SK-N-SH (cell line): ENCODE measurements at regions of chr2 and their contacts with region 1.

Region 1: DNA sequence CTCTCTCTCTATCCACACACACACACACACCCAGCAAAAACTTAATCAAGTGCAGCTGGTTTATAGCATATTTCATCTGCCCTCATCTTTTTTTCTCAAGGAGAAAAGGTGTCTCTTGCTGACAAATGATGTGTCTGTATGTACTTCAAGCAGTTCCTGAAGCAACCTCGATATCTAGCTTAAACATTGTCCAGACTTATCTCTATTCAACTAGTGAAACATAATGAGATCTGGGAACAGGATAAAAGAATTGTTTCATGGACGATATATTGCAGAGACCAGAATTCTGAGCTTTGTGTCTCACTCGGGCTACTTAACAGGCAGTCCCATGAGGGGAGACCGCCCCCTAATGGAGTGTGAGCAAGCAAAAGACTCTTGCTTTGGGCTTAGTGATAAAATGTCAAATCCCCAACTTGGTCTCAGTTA is 929.2 kb upstream of the SOX11 start:
- DNase-seq: peak; percentile 62
- H3K4me3 ChIP-seq: no peak overlapping the region; a peak in 1 of 4 replicates
- H3K27ac ChIP-seq: no peak overlapping the region
- H3K4me1 ChIP-seq: peaks cover 2 to 6% of the 10 kb centered on the region in 2 experiments; a peak in 3 of 4 replicates
- H3K27me3 ChIP-seq: no peaks in the 10 kb centered on the region
- CTCF ChIP-seq: no peak
- EP300 ChIP-seq: no peak
- RAD21 ChIP-seq: peak; percentile 76

Region 2: GRCh38 chr2:4039896-4040295 is 723.1 kb before region 1 on chr2:
- CTCF ChIA-PET with region 1: no interaction called
- POLR2A ChIA-PET with region 1: no interaction called
- DNase-seq: no peak
- H3K4me3 ChIP-seq: no peak overlapping the region
- H3K27ac ChIP-seq: no peak overlapping the region
- H3K4me1 ChIP-seq: no peaks in the 10 kb centered on the region
- H3K27me3 ChIP-seq: no peaks in the 10 kb centered on the region
- CTCF ChIP-seq: no peak
- EP300 ChIP-seq: no peak
- RAD21 ChIP-seq: no peak

Region 3: DNA sequence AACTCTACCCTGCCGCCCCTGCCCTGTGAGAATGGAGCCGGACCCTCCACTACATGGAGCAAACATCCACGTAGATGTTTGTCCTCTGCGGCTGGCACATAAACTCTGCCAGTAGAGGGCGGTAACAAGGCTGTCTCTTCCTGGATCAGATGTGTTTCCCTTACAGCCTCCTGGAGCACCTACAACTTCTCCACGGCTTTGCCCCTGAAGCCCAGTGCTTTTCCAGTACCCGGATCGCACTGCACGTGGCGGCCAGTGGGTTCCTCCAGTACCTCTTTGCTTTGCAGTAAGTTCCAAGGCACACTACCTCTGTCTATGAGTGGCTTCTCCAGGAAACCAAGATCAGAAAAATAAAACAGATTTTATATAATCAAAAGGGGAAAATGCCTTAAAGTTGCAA is 408.3 kb before region 1 on chr2:
- CTCF ChIA-PET with region 1: interaction called, 15 read pairs
- POLR2A ChIA-PET with region 1: no interaction called
- DNase-seq: peak; percentile 51
- H3K4me3 ChIP-seq: no peak overlapping the region; a peak in 1 of 4 replicates
- H3K27ac ChIP-seq: no peak overlapping the region
- H3K4me1 ChIP-seq: no peaks in the 10 kb centered on the region; a peak in 1 of 4 replicates
- H3K27me3 ChIP-seq: no peaks in the 10 kb centered on the region
- CTCF ChIP-seq: peak; percentile 24; the same call in 1 of the 2 replicates
- EP300 ChIP-seq: no peak
- RAD21 ChIP-seq: peak; percentile 63

Region 4: DNA sequence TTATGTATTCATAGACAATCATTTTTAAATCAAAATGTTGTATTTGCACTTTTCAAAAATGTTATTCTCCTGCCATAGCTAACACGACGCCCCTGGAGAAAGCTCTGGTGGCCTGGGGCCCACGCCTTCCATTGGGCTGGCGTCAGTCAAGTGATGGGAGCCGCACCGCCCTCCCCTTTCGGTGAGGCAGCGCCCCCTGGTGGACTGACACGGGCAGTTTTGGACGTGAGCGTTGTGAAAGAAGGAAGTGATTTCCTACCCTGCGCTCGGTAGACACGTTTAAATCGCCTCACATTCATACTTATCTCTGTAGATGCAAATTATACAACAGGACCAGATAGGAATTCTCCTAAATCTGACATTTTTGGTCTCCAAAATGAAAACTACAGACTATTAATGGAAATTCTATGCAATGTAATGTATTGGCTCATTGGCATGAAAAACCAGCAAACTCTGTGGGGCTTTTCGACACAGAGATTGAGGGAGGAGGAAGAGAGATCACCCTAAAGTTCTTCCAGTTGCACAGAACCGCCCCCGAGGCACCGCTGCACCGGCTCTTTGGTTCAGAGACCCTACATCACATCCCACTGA is 603.0 kb after region 1 on chr2:
- CTCF ChIA-PET with region 1: no interaction called
- POLR2A ChIA-PET with region 1: no interaction called
- DNase-seq: peak; percentile 80
- H3K4me3 ChIP-seq: no peak overlapping the region; a peak in 1 of 4 replicates
- H3K27ac ChIP-seq: no peak overlapping the region
- H3K4me1 ChIP-seq: no peaks in the 10 kb centered on the region
- H3K27me3 ChIP-seq: no peaks in the 10 kb centered on the region
- CTCF ChIP-seq: no peak; the same call in 1 of the 2 replicates
- EP300 ChIP-seq: no peak
- RAD21 ChIP-seq: peak; percentile 64